ENCODE measurements at regions of chr10 and their contacts with region 1.

Region 1: GRCh38 chr10:22003079-22003913 is at the start of gene DNAJC1:
- DNase-seq: peak; percentile 99
- ATAC-seq: peak; percentile 93
- H3K4me3 Mint-ChIP-seq: peak within 1 kb of the TSS; percentile 94
- H3K27ac Mint-ChIP-seq: peak within 1 kb of the TSS; percentile 95
- H3K4me1 Mint-ChIP-seq: peaks cover 29% of the 10 kb centered on the region
- H3K27me3 Mint-ChIP-seq: no peaks in the 10 kb centered on the region
- total RNA-seq, gene DNAJC1: 20.6 to 28.1 TPM

Region 2: GRCh38 chr10:21980691-21981090 is 22.6 kb before region 1 on chr10:
- CTCF ChIA-PET with region 1: no interaction called
- POLR2A ChIA-PET with region 1: no interaction called
- intact Hi-C with region 1: no loop called
- DNase-seq: no peak
- ATAC-seq: no peak
- H3K4me3 Mint-ChIP-seq: no peak overlapping the region
- H3K27ac Mint-ChIP-seq: no peak overlapping the region
- H3K4me1 Mint-ChIP-seq: peaks cover 7% of the 10 kb centered on the region
- H3K27me3 Mint-ChIP-seq: no peaks in the 10 kb centered on the region

Region 3: GRCh38 chr10:22097696-22098095 is 94.4 kb after region 1 on chr10:
- CTCF ChIA-PET with region 1: no interaction called
- POLR2A ChIA-PET with region 1: no interaction called
- intact Hi-C with region 1: no loop called
- DNase-seq: no peak
- ATAC-seq: no peak
- H3K4me3 Mint-ChIP-seq: no peak overlapping the region
- H3K27ac Mint-ChIP-seq: no peak overlapping the region
- H3K4me1 Mint-ChIP-seq: no peaks in the 10 kb centered on the region
- H3K27me3 Mint-ChIP-seq: peaks cover 1% of the 10 kb centered on the region

Region 4: GRCh38 chr10:22210277-22210676 is 207.0 kb after region 1 on chr10:
- CTCF ChIA-PET with region 1: no interaction called
- POLR2A ChIA-PET with region 1: no interaction called
- intact Hi-C with region 1: no loop called
- DNase-seq: no peak
- ATAC-seq: no peak
- H3K4me3 Mint-ChIP-seq: no peak overlapping the region
- H3K27ac Mint-ChIP-seq: no peak overlapping the region
- H3K4me1 Mint-ChIP-seq: no peaks in the 10 kb centered on the region
- H3K27me3 Mint-ChIP-seq: peaks cover 6% of the 10 kb centered on the region

Region 5: DNA sequence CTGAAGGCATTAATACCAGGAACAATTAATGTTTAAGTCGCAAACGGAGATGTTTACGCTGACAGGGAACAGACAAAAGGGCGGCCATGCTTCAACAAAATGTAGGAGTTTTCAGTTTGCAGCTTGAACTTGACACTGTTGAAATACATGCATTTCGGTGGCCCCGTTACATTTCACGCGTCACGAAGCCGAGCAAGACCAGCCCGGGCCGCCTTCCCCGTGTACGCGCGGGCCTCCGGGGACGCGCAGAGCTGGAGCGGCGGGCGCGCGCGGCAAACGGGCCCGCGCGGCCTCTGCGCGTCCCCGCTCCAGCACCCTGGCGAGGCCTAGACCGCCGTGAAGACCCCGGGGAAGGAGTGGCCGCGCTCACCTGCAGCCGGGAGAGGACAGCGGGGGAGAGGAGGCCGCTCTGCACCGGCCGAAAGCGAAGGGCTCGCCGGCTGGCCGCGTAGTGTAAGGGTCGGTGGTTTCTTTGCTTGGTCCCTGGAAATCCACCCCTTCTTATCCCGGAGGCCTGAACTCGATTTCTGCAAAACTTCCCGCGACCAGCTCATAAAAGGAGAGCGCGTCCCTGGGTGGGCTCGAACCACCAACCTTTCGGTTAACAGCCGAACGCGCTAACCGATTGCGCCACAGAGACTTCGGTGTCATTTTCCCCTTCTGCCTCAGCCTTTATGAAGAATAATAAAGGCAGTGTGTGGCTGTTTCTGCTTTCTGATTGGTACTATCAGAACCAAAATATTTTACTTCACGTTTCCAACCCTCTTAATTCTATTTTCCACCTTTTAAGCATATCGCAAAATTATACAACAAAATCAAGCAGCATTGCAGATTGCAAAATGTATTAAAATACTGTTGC is 225.9 kb after region 1 on chr10:
- CTCF ChIA-PET with region 1: no interaction called
- POLR2A ChIA-PET with region 1: no interaction called
- intact Hi-C with region 1: loop called (anchors 1 to 2 kb)
- DNase-seq: peak; percentile 92
- ATAC-seq: peak; percentile 75
- H3K4me3 Mint-ChIP-seq: peak overlapping the region; percentile 89
- H3K27ac Mint-ChIP-seq: peak overlapping the region; percentile 90
- H3K4me1 Mint-ChIP-seq: peaks cover 20% of the 10 kb centered on the region
- H3K27me3 Mint-ChIP-seq: no peaks in the 10 kb centered on the region

Region 6: DNA sequence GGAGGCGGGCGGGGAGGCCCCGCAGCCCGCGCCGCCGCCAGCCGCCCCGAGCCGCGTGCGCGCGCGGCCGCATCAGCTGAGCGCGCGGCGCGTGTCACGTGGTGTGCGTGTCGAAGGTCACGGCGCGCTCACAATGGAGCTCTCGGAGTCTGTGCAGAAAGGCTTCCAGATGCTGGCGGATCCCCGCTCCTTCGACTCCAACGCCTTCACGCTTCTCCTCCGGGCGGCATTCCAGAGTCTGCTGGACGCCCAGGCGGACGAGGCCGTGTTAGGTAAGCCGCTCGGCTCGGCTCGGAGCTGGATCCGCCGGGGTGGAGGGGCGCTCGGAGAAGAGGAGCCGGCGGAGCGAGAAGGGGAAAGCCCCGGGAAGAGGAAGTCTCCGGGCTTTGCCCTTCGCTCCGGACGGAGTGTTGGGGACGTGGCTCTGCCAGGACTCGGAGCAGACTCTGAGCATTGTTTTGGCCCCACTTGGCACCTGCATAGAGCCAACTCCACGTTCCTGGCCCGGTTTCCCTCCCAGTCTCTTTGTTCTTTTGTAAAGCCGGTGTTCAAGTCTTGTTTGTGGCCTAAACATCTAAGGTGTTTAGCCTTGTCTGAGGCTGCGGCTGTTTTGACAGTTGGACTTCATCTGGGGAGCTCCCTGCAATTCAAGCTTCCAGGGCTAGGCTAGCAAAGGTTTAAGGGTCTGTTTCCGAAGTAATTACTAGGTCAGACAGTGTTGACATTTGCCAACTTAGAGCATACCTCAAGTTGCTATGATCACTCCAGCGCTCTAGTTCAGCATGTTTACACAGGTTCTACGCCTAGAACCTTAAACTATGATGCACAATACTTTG is 313.2 kb after region 1 on chr10 and contains the start of gene COMMD3:
- CTCF ChIA-PET with region 1: no interaction called
- POLR2A ChIA-PET with region 1: no interaction called
- intact Hi-C with region 1: loop called (anchors 2 to 5 kb)
- DNase-seq: peak; percentile 88
- ATAC-seq: peak; percentile 72
- H3K4me3 Mint-ChIP-seq: peak within 1 kb of the TSS; percentile 94
- H3K27ac Mint-ChIP-seq: peak within 1 kb of the TSS; percentile 97
- H3K4me1 Mint-ChIP-seq: peaks cover 38% of the 10 kb centered on the region
- H3K27me3 Mint-ChIP-seq: peaks cover 7% of the 10 kb centered on the region
- total RNA-seq, gene COMMD3: 53.8 to 77.1 TPM

Region 7: GRCh38 chr10:22573820-22574569 is 570.7 kb after region 1 on chr10:
- CTCF ChIA-PET with region 1: no interaction called
- POLR2A ChIA-PET with region 1: no interaction called
- intact Hi-C with region 1: loop called in 1 of 2 experiments (anchors 2 kb)
- DNase-seq: peak; percentile 37
- ATAC-seq: no peak
- H3K4me3 Mint-ChIP-seq: no peak overlapping the region
- H3K27ac Mint-ChIP-seq: no peak overlapping the region
- H3K4me1 Mint-ChIP-seq: peaks cover 46% of the 10 kb centered on the region
- H3K27me3 Mint-ChIP-seq: no peaks in the 10 kb centered on the region

Region 8: GRCh38 chr10:22988581-22989360 is 985.5 kb after region 1 on chr10:
- CTCF ChIA-PET with region 1: interaction called, 5 read pairs
- POLR2A ChIA-PET with region 1: no interaction called
- intact Hi-C with region 1: loop called (anchors 2 kb)
- DNase-seq: peak; percentile 73
- ATAC-seq: peak; percentile 68
- H3K4me3 Mint-ChIP-seq: no peak overlapping the region
- H3K27ac Mint-ChIP-seq: no peak overlapping the region
- H3K4me1 Mint-ChIP-seq: peaks cover 15% of the 10 kb centered on the region
- H3K27me3 Mint-ChIP-seq: peaks cover 5% of the 10 kb centered on the region

Region 9: GRCh38 chr10:23438550-23439441 is 1435.5 kb after region 1 on chr10 and contains the start of gene OTUD1:
- CTCF ChIA-PET with region 1: no interaction called
- POLR2A ChIA-PET with region 1: no interaction called
- intact Hi-C with region 1: loop called in 1 of 2 experiments (anchors 1 kb)
- DNase-seq: peak; percentile 96
- ATAC-seq: peak; percentile 88
- H3K4me3 Mint-ChIP-seq: peak within 1 kb of the TSS; percentile 85
- H3K27ac Mint-ChIP-seq: peak within 1 kb of the TSS; percentile 91
- H3K4me1 Mint-ChIP-seq: peaks cover 28% of the 10 kb centered on the region
- H3K27me3 Mint-ChIP-seq: no peaks in the 10 kb centered on the region
- total RNA-seq, gene OTUD1: 5.7 to 6.5 TPM

Measured in activated CD4-positive, alpha-beta T cell treated with anti-CD3 and anti-CD28 coated beads for 36 hours (primary cell).